Endothelial cell of umbilical vein (primary cell): ENCODE measurements at regions of chr9 and their contacts with region 1.

Region 1: DNA sequence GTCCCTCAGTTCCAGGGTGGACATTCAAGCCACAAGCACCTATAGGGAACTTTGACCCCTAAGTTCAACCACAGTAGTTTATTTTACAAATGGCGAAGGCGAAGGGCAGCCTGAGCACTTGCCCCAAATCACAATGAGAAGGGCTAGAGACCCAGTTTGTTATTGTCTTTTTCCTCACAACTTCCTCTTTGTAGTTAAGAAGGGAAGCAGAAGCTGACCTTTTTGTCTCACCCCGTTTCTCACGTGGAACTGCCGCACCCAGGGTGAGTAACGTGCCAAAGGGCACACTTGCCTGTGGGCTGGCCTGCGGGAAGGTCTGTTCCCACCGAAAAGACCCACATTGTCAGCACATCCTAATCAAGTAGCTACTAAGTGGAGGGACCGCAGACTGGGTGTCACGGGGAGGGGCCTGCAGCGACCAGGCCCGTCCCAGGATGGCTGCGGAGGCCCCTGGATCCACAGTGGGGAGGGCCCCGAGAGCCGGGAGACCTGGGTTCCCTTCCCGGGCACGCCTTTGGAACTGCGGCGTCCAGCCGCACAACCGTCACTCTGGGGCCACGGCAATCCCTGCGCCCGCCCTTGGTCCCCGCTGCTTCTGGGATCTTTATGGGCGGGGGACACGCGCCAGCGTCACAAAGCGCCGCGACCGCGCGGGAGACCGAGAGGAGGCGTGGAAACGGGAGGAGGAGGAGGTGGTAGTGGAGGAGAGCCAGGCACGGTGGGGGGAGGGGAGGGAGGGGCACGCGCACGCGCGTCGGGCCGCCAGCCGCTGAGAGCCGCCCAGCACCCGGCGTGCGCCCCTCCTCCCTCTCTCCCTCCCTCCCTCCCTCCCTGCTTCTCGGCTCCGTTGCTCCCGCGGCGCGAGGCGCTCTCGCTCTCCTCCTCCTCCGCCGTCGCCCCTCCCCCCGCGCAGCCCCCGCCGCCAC is at the start of gene UBE2R2:
- DNase-seq: peak; percentile 93
- H3K4me3 ChIP-seq: peak within 1 kb of the TSS; percentile 67 to 97 (median 83)
- H3K27ac ChIP-seq: peak within 1 kb of the TSS; percentile 95
- H3K4me1 ChIP-seq: peaks cover 42% of the 10 kb centered on the region
- H3K27me3 ChIP-seq: no peaks in the 10 kb centered on the region
- CTCF ChIP-seq: no peak
- POLR2A ChIP-seq: peak; percentile 70
- total RNA-seq, gene UBE2R2: 51.5 and 54.3 TPM in 2 replicates

Region 2: DNA sequence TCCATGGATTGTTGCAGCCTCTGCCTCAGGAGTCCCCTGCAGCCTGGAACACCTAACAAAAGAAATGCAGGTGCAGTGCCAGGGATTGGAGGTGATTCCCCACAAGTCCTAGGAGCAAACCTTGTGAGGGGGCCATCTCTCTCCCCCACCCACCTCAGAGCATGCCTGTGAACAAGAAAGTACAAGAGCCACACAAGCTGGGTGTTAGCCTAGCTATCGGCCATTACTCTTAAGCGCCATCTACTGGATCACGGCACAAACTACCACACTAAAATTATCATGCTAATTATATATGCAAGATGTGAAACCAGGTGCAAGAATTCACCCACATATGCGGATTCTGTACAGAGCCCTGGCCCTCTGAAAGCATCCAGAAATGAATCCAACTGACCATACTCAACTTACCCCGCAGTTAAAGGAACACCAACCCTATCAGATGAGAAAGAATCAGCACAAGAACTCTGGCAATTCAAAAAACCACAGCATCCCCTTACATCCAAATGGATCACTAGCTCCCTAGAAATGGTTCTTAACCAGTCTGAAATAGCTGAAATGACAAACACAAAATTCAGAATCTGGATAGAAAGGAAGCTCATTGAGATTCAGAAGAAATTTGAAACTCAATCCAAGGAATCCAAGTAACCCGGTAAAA is 37.8 kb before region 1 on chr9:
- CTCF ChIA-PET with region 1: interaction called, 20 read pairs
- POLR2A ChIA-PET with region 1: no interaction called
- dilution Hi-C with region 1: no loop called
- intact Hi-C with region 1: no loop called
- DNase-seq: peak; percentile 73
- H3K4me3 ChIP-seq: no peak overlapping the region
- H3K27ac ChIP-seq: no peak overlapping the region
- H3K4me1 ChIP-seq: no peaks in the 10 kb centered on the region
- H3K27me3 ChIP-seq: no peaks in the 10 kb centered on the region
- CTCF ChIP-seq: peak; percentile 72 to 80
- POLR2A ChIP-seq: no peak

Region 3: DNA sequence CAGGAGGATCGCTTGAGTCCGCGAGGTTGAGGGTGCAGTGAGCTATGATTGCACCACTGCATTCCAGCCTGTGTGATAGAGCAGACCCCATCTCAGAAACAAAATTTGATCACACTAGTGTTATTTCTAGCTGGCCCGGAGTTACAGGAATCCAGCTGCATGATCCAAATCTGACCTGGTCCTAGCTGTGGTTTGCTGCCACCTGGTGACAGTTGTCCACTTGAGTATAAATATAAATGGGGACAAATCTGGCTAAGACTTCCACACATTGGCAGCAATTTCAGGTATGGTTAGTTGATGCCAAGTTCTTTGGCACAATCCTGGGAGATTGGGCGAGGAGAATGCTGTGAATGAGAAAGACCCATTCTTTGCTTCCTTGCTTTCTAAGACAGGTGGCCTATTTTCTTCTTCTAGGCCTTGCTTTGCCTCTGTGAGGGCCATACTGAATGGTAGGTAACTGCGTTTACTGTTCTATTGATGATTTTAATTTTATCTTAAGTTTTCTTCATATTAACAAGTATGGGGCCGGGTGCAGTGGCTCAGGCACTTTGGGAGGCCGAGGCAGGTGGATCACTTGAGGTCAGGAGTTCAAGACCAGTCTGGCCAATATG is 35.7 kb after region 1 on chr9:
- CTCF ChIA-PET with region 1: interaction called, 75 read pairs
- POLR2A ChIA-PET with region 1: no interaction called
- dilution Hi-C with region 1: no loop called
- intact Hi-C with region 1: loop called (anchors 1 kb)
- DNase-seq: peak; percentile 77
- H3K4me3 ChIP-seq: no peak overlapping the region
- H3K27ac ChIP-seq: no peak overlapping the region
- H3K4me1 ChIP-seq: peaks cover 22% of the 10 kb centered on the region
- H3K27me3 ChIP-seq: no peaks in the 10 kb centered on the region
- CTCF ChIP-seq: peak; percentile 33 to 45
- POLR2A ChIP-seq: no peak

Region 4: DNA sequence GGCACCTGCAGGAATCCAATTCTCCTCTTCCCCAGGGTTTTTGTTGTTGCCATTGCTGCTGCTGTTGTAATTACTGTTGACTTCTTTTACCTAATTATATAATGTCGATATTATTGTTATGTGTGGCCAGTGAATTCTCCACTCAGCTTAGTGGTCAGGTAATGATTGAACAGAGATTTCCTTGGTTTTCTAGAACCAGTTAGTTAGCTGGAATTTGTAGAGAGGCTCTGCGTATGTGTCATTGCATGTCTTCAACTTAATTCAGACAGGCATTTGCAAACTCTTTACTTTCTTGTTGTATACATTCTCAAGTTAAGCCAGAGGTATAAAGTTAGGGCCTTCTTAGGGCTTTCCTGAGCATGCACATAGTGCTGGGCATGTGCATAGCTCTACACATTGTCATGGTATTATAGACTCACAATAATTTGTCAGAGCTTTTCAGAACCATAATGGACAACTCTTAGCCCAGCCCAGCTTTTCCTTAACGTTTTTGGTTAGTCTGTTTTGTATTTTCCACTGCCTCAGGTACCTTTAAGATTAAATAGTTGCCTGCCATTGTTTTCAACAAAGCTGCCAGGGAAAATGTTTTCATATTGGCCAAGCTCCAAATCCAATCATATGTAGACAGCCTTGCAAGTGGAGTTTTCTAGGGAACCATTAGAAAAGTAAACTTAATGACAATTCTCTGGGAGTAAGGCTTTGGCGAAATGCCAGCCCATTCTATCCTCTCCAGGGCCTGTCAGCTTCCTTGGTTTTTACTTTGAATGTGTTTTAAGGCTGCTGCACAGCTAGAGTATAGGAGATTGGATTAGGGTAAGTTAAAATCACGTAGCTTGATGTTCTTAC is 68.5 kb after region 1 on chr9:
- CTCF ChIA-PET with region 1: interaction called, 15 read pairs
- POLR2A ChIA-PET with region 1: interaction called, 4 read pairs
- dilution Hi-C with region 1: no loop called
- intact Hi-C with region 1: no loop called
- DNase-seq: peak; percentile 97
- H3K4me3 ChIP-seq: no peak overlapping the region
- H3K27ac ChIP-seq: peak overlapping the region; percentile 0
- H3K4me1 ChIP-seq: peaks cover 17% of the 10 kb centered on the region
- H3K27me3 ChIP-seq: no peaks in the 10 kb centered on the region
- CTCF ChIP-seq: no peak
- POLR2A ChIP-seq: no peak

Region 5: GRCh38 chr9:33919276-33919897 is 102.8 kb after region 1 on chr9:
- CTCF ChIA-PET with region 1: interaction called, 30 read pairs
- POLR2A ChIA-PET with region 1: no interaction called
- dilution Hi-C with region 1: no loop called
- intact Hi-C with region 1: loop called (anchors 5 kb)
- DNase-seq: no peak
- H3K4me3 ChIP-seq: no peak overlapping the region
- H3K27ac ChIP-seq: no peak overlapping the region
- H3K4me1 ChIP-seq: no peaks in the 10 kb centered on the region
- H3K27me3 ChIP-seq: no peaks in the 10 kb centered on the region
- CTCF ChIP-seq: no peak
- POLR2A ChIP-seq: no peak

Region 6: GRCh38 chr9:34048923-34049697 is 232.5 kb after region 1 on chr9:
- CTCF ChIA-PET with region 1: no interaction called
- POLR2A ChIA-PET with region 1: no interaction called
- dilution Hi-C with region 1: no loop called
- intact Hi-C with region 1: loop called (anchors 10 kb)
- DNase-seq: peak; percentile 99
- H3K4me3 ChIP-seq: peak overlapping the region; percentile 70 to 86 (median 81)
- H3K27ac ChIP-seq: peak overlapping the region; percentile 77
- H3K4me1 ChIP-seq: peaks cover 22% of the 10 kb centered on the region
- H3K27me3 ChIP-seq: no peaks in the 10 kb centered on the region
- CTCF ChIP-seq: no peak
- POLR2A ChIP-seq: peak; percentile 32